Activated CD4-positive, alpha-beta memory T cell treated with anti-CD3 and anti-CD28 coated beads for 36 hours (primary cell): ENCODE measurements at regions of chr5 and their contacts with region 1.

Region 1: DNA sequence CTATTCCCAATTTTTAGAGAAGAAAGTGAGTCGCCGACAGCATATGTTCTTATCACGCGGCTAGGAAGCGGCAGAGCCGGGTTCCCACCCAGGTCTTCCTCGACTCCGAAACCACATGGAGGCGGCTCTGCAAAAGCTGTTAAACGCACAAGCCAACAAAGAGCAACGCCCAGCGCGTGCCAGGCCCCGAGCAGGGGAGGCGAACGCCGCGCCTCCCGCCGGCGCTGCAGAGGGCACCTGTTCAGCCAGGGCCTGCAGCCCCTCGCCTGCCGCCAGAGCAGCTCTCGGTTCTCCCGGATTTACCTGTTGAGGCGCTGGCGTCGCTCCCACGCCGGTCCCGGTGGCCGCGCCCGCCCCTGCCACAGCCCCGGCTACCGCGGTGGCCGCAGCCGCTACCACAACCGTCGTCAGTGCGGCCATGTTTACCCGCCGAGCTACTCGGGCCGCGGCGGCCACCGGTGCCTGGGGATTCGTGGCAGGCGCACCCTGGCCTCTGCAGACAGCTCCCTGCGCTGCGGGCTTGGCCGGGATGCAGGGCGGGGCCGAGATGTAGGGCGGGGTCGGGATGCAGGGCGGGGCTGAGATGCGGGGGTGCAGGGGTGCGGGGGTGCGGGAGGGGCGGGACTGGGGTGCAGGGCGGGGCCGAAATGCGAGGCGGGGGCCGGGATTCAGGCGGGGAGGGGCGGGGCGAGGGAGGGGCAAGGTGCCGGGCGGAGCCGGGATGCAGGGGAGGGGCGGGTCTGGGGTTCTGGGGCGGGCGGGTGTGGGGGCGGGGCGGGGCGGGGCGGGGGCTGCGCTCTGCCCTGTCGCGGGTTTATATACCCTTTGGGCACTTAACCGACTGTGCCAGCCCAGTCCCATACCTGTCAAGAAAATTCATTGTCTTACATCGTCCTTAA is at the start of gene CCDC112:
- DNase-seq: peak; percentile 87
- H3K4me3 Mint-ChIP-seq: peak within 1 kb of the TSS; percentile 76
- H3K27ac Mint-ChIP-seq: no peak within 1 kb of the TSS
- H3K4me1 Mint-ChIP-seq: peaks cover 7% of the 10 kb centered on the region
- H3K27me3 Mint-ChIP-seq: peaks cover 8% of the 10 kb centered on the region
- total RNA-seq, gene CCDC112: 1.7 to 1.8 TPM

Region 2: DNA sequence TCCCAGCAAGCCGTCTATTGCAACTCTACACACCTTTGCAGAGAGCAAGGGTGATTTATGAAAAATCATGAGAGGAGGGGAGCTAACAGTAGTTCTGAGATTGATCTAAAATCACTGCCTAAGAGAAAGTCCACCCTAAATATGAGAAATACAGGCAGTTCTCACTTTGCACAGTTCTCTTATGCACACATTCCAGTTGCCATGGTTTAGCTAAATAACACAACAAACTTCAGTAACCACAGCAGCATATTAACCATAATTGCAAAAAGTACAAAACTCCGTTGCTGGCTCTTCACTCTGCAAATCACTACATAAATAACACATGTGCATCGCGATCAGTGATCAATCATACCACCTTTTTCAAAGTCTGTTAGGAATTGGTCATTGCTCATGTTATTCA is 64.8 kb before region 1 on chr5:
- CTCF ChIA-PET with region 1: no interaction called
- POLR2A ChIA-PET with region 1: no interaction called
- intact Hi-C with region 1: no loop called
- DNase-seq: no peak
- H3K4me3 Mint-ChIP-seq: no peak overlapping the region
- H3K27ac Mint-ChIP-seq: no peak overlapping the region
- H3K4me1 Mint-ChIP-seq: no peaks in the 10 kb centered on the region
- H3K27me3 Mint-ChIP-seq: no peaks in the 10 kb centered on the region

Region 3: DNA sequence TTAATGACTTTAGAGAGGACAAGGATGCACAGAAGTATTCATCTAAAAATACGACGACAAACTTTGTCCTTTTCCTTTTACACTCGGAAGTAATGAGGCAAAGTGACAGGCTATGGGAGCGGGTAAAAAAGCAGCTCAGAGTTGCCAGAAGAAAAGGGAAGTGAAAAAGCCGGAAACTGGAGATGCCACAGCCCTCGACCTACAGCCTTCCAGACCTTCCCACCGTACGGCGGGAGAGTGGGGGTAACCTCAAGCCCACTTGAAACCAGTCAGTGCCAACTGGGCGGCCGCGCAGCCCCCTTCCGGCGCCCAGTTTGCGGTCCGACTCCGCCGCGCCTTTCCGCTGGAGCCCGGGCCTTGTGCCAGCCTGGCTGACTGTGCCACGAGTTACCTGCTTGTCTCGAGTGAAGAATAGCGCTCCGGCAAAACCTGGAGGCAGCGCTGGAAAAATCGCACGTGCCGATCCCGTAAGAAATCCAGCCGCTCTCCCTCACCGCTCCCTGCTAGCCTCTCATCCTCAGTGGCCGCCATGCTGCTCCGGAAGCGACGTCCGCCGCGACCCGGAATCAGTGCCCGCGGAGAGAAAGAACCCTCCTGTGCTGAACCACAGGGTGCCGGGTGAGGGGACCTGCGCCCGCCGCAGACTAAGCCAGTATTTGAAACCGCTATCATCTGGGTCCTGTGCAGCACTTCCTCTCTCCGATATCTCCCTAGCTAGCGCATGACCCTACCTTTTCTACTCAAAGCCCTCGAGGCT is 33.9 kb before region 1 on chr5 and contains the start of gene PGGT1B:
- CTCF ChIA-PET with region 1: interaction called, 3 read pairs
- POLR2A ChIA-PET with region 1: interaction called, 3 read pairs
- intact Hi-C with region 1: loop called (anchors 1 kb)
- DNase-seq: peak; percentile 85
- H3K4me3 Mint-ChIP-seq: peak within 1 kb of the TSS; percentile 92
- H3K27ac Mint-ChIP-seq: peak within 1 kb of the TSS; percentile 80
- H3K4me1 Mint-ChIP-seq: peaks cover 47% of the 10 kb centered on the region
- H3K27me3 Mint-ChIP-seq: no peaks in the 10 kb centered on the region
- total RNA-seq, gene PGGT1B: 38.7 TPM